ENCODE measurements at regions of chr16 and their contacts with region 1.

Region 1: GRCh38 chr16:50741808-50742575 is at the start of gene CYLD:
- DNase-seq: peak; percentile 93 to 100 (median 100)
- ATAC-seq: peak; percentile 91 to 93
- H3K4me3 Mint-ChIP-seq: peak within 1 kb of the TSS; percentile 91 to 98 (median 96)
- H3K27ac Mint-ChIP-seq: peak within 1 kb of the TSS; percentile 95 to 99 (median 98)
- H3K4me1 Mint-ChIP-seq: peaks cover 21 to 56% (median 44%) of the 10 kb centered on the region in 4 donors
- H3K27me3 Mint-ChIP-seq: no peaks in the 10 kb centered on the region
- polyA plus RNA-seq, gene CYLD: 106 to 131 (median 107) TPM

Region 2: DNA sequence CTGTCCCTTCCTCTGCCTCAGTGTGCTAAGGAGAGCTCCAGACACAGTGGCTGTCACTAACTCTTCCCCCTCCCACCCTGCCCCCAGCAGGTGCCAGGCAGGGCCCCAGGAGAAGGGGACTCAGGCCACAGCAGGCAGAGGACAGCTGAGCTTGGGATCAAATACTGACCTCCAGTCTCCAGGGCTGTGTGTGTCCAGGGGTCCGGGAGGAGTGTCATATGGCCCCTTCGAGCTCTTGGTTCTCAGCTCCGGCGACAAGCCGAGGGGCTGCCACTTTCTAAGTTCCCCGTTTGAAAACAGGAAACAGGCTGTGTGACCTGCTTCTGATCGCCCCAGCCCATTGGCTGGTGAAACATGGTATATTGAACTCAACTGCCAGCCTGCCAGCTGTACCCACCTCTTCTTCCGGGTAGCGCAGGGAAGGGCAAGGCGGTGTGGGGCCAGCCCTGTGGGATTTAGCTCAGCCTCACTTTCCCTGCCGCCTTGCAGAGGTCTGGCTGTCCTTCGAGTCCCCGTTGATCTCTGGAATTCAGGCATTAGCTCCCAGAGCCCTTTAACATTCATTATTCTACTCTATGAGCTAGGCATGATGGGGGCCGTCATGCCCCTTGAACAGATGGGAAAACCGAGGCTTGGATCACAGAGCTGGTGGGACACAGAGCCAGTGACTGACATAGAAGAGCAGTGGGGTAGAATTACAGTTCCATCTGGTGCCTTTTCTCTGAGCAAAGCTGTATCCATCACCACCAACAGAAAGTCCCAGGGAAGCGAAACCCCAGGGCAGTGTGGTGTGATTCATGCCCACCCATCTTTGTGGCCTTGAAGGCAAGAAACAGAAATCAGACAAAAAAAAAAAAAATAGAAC is 60.7 kb before region 1 on chr16 and contains the start of gene SNX20:
- POLR2A ChIA-PET with region 1: interaction called, 17 read pairs
- DNase-seq: peak; percentile 36 to 83 (median 66)
- ATAC-seq: peak; percentile 89 to 92
- H3K4me3 Mint-ChIP-seq: peak within 1 kb of the TSS; percentile 87 to 94 (median 92)
- H3K27ac Mint-ChIP-seq: peak within 1 kb of the TSS; percentile 94 to 98 (median 98)
- H3K4me1 Mint-ChIP-seq: peaks cover 48 to 93% (median 88%) of the 10 kb centered on the region in 4 donors
- H3K27me3 Mint-ChIP-seq: no peaks in the 10 kb centered on the region
- polyA plus RNA-seq, gene SNX20: 31.1 to 50.4 (median 34.4) TPM

Region 3: GRCh38 chr16:50719518-50720337 is 22.3 kb before region 1 on chr16:
- POLR2A ChIA-PET with region 1: interaction called, 12 read pairs
- DNase-seq: peak in 5 of 10 donors; percentile 17 to 39 (median 34)
- ATAC-seq: peak; percentile 84 to 87
- H3K4me3 Mint-ChIP-seq: peak overlapping the region in 6 of 10 donors; percentile 24 to 64 (median 50)
- H3K27ac Mint-ChIP-seq: peak overlapping the region; percentile 23 to 83 (median 69)
- H3K4me1 Mint-ChIP-seq: peaks cover 26 to 42% (median 34%) of the 10 kb centered on the region in 4 donors
- H3K27me3 Mint-ChIP-seq: no peaks in the 10 kb centered on the region

Region 4: DNA sequence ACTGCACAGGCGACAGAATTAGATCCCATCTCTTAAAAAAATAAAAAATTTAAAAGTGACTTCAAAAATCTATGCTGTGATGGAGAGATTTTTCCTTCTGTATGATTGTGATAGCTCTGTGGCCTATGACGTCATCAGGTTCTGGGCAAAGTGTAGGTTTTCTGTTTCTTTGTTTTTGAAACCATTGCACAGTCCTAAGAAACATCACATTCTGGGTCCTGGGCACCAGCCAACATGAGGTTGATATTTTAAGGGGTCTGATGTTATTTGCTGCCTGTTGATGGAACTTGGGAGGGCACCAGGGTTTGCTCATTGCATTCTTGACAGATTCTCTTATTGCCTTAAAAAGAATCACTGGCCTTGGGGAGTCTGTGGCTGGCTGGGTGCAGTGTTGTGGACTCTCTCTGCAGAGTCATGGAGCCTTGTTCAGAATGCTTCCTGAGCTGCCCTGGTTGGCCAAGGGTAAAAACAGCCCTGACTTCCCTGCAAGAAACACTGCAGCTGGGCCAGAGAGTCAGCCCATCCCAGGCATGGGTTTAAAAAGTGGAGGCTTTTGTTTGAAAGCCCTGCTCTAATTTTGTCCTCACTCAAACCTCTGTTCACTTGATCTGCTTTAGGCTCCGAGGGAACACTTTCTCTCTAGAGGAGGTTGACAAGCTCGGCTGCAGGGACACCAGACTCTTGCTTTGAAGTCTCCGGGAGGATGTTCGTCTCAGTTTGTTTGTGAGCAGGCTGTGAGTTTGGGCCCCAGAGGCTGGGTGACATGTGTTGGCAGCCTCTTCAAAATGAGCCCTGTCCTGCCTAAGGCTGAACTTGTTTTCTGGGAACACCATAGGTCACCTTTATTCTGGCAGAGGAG is 10.6 kb before region 1 on chr16:
- POLR2A ChIA-PET with region 1: interaction called, 16 read pairs
- DNase-seq: no peak
- ATAC-seq: peak; percentile 63 to 78
- H3K4me3 Mint-ChIP-seq: peak overlapping the region in 4 of 10 donors; percentile 4 to 39 (median 17)
- H3K27ac Mint-ChIP-seq: peak overlapping the region in 9 of 10 donors; percentile 8 to 84 (median 60)
- H3K4me1 Mint-ChIP-seq: peaks cover 5 to 22% (median 12%) of the 10 kb centered on the region in 4 donors
- H3K27me3 Mint-ChIP-seq: peaks cover 0 to 1% (median 0%) of the 10 kb centered on the region in 5 donors

Measured in naive thymus-derived CD8-positive, alpha-beta T cell (primary cell).